ENCODE measurements at regions of chr9 and their contacts with region 1.

Region 1: GRCh38 chr9:14221558-14221957 is 92.4 kb downstream of the NFIB start:
- DNase-seq: peak in 1 of 2 donors; percentile 72
- H3K4me3 ChIP-seq: no peak overlapping the region
- H3K27ac ChIP-seq: peak overlapping the region; percentile 61 to 64
- H3K4me1 ChIP-seq: peaks cover 6 to 31% of the 10 kb centered on the region in 2 donors
- H3K27me3 ChIP-seq: no peaks in the 10 kb centered on the region
- CTCF ChIP-seq: no peak

Region 2: GRCh38 chr9:14180960-14181537 is 40.5 kb before region 1 on chr9:
- intact Hi-C with region 1: no loop called
- DNase-seq: no peak
- H3K4me3 ChIP-seq: peak overlapping the region; percentile 23 to 28
- H3K27ac ChIP-seq: peak overlapping the region; percentile 38 to 47
- H3K4me1 ChIP-seq: peaks cover 0 to 32% of the 10 kb centered on the region in 2 donors
- H3K27me3 ChIP-seq: no peaks in the 10 kb centered on the region
- CTCF ChIP-seq: no peak

Region 3: GRCh38 chr9:14198841-14199455 is 22.6 kb before region 1 on chr9:
- intact Hi-C with region 1: loop called (anchors 2 kb)
- DNase-seq: peak in 1 of 2 donors; percentile 73
- H3K4me3 ChIP-seq: peak overlapping the region; percentile 6 to 22
- H3K27ac ChIP-seq: peak overlapping the region; percentile 13 to 68
- H3K4me1 ChIP-seq: peaks cover 0 to 41% of the 10 kb centered on the region in 2 donors
- H3K27me3 ChIP-seq: no peaks in the 10 kb centered on the region
- CTCF ChIP-seq: no peak

Region 4: GRCh38 chr9:14372437-14373335 is 151.1 kb after region 1 on chr9:
- intact Hi-C with region 1: no loop called
- DNase-seq: peak in 1 of 2 donors; percentile 74
- H3K4me3 ChIP-seq: no peak overlapping the region
- H3K27ac ChIP-seq: peak overlapping the region in 1 of 2 donors; percentile 33
- H3K4me1 ChIP-seq: peaks cover 0 to 22% of the 10 kb centered on the region in 2 donors
- H3K27me3 ChIP-seq: no peaks in the 10 kb centered on the region
- CTCF ChIP-seq: no peak

Measured in ascending aorta (tissue), 2 donors.